Activated CD4-positive, alpha-beta T cell treated with anti-CD3 and anti-CD28 coated beads for 36 hours (primary cell): ENCODE measurements at regions of chr6 and their contacts with region 1.

Region 1: DNA sequence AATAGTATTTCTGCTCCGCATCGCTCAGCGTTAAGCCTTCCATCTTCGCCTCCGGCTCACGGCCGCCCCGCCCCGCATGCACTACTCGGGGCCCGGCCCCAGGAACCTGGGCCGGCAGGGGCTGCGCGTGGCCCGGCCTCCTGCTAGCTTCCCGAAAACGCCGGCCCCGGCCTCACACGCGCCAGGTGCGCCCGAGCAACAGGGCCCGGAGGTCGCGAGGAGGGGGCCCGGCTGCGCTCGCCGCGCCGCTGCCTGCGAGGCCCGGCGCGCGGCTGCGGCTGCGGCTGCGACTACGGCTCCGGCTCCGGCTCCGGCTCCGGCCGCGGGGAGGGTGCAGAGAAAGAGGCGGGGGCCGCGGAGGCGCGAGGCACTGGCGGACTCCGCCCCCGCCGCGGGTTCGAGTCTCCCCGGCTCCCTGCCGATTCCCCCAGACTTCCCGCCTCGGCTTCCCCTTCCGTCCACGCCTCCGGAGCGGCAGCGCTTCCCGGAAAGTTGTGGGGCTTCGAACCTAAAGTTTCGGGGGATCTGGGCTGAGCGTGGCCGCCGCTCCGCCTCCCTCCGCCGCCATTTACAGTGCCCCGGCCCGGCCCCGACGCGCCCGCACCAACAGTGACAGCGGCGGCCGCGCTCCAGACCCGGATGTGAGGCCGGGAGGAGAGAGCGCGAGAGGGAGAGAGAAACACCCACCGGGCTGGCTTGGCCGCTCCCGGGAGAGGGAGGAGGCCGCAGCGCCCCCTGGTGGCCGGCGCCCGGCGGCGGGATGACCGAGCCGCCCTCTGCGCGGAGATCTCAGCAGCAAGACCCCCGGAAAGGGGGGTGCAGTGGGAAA is at the start of gene REPS1:
- DNase-seq: peak; percentile 95
- ATAC-seq: peak; percentile 96
- H3K4me3 Mint-ChIP-seq: peak within 1 kb of the TSS; percentile 87
- H3K27ac Mint-ChIP-seq: peak within 1 kb of the TSS; percentile 91
- H3K4me1 Mint-ChIP-seq: peaks cover 6% of the 10 kb centered on the region
- H3K27me3 Mint-ChIP-seq: no peaks in the 10 kb centered on the region
- total RNA-seq, gene REPS1: 60.3 to 90.9 TPM

Region 2: DNA sequence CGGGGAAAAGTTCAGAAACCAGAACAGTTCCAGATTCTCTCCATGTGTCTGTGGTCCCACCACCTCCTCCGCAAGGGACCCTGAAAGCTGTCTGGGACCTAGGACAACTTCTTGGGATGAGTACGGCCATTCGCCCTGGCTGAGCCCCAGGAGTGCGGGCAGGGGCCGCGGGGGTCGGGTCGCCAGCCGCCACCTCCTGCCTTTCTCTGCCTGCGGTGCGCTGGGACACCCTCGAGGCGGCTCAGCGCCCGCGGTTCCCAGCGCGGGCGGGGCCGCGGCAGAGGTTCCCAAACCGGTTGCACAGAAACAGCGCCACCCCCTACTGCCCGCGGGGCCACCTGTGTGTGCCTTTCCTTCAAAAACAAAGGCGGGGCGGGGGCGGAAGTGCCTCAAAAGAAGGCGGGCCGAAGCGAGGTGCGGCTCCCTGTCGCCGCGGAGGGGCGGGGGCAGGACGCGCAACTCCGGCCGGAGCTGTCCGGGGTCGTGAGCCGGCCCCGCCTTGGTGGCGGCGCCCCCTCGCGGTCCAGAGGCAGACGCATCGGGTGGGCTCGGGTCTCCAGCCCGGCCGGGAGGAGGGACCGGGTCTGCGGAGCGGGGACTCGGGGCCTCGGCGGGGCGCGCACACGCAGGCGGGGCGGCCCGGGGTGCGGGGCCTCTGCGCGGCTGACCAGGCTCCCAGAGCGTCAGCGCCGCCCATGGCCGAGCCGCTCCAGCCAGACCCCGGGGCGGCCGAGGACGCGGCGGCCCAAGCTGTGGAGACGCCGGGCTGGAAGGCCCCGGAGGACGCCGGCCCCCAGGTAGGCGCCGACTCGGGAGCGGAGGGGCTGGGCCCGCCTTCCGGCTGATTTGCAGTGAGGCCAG is 583.8 kb before region 1 on chr6 and contains the start of gene HEBP2:
- CTCF ChIA-PET with region 1: no interaction called
- POLR2A ChIA-PET with region 1: no interaction called
- intact Hi-C with region 1: loop called in 1 of 2 experiments (anchors 10 kb)
- DNase-seq: peak; percentile 91
- ATAC-seq: peak; percentile 88
- H3K4me3 Mint-ChIP-seq: peak within 1 kb of the TSS; percentile 70
- H3K27ac Mint-ChIP-seq: peak within 1 kb of the TSS; percentile 37
- H3K4me1 Mint-ChIP-seq: peaks cover 6% of the 10 kb centered on the region
- H3K27me3 Mint-ChIP-seq: no peaks in the 10 kb centered on the region
- total RNA-seq, gene HEBP2: 4.0 to 4.7 TPM

Region 3: DNA sequence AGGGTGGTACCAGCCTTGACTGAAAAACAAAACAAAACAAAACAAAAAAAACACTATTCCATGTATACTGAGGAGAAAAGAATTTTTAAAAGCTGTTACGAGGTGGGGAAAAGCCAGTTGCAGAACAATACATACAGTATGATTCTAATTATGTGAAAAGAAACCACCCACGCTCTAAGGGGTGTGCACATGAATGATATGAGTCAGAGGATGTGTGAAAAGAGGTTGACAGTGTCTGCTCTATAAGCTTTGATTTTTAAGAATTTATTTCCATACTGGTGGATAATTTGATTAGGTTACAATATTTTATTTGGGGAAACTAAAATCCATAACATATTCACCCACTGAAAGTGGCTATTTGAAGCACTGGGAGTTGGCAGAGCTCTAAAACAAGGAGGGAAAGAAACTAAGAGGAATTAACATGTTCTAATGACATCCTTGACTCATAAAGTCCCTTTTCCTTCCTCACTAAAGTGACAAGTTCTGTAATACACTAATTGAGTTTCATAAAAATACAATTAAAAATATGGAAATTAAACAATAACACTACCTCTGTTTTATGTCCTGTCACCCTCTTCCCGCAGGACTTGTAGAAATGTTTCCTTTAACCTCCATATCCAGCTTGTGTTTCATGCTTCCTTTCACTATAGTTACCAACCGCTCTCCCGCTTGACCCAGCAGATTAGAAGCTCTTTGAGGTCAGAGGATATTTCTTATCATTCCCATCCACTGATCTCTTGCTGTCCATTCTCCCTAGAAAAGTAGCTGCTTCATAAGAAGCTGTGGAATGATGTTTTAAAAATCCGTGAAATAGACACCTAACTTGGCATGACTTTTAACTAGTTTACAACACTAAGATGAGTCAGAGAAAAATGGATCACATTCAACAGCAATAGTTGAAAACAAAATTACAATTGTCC is 332.9 kb before region 1 on chr6:
- CTCF ChIA-PET with region 1: no interaction called
- POLR2A ChIA-PET with region 1: no interaction called
- intact Hi-C with region 1: no loop called
- DNase-seq: peak; percentile 66
- ATAC-seq: peak; percentile 98
- H3K4me3 Mint-ChIP-seq: no peak overlapping the region
- H3K27ac Mint-ChIP-seq: no peak overlapping the region
- H3K4me1 Mint-ChIP-seq: peaks cover 21% of the 10 kb centered on the region
- H3K27me3 Mint-ChIP-seq: peaks cover 17% of the 10 kb centered on the region

Region 4: GRCh38 chr6:138692058-138692977 is 295.5 kb before region 1 on chr6:
- CTCF ChIA-PET with region 1: interaction called, 3 read pairs
- POLR2A ChIA-PET with region 1: no interaction called
- intact Hi-C with region 1: loop called in 1 of 2 experiments (anchors 2 kb)
- DNase-seq: peak; percentile 74
- ATAC-seq: peak; percentile 63
- H3K4me3 Mint-ChIP-seq: peak overlapping the region; percentile 68
- H3K27ac Mint-ChIP-seq: no peak overlapping the region
- H3K4me1 Mint-ChIP-seq: peaks cover 10% of the 10 kb centered on the region
- H3K27me3 Mint-ChIP-seq: peaks cover 29% of the 10 kb centered on the region

Region 5: DNA sequence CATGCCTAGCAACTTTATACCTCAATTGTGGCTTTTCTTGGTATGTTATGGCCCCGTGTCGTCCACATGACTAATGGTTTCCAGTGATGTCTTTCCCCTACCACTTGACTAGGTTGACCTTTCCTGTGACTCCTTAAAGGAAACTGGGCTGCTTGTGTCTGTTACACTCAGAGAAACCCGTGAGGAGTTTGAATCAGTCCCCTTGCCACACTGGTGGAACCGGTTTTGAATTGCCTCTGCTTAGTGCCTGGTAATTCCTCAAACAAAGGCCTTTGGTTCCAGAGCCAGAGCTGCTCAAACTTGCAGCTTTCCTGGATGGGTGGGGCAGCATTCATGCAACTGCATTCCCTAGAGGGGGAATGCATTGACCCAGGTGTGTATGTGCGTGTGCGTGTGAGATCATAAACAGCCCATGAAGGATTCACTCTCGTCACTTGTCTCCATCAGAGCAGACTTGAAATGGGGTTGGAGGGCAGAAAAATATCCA is 170.0 kb before region 1 on chr6:
- CTCF ChIA-PET with region 1: interaction called, 18 read pairs
- POLR2A ChIA-PET with region 1: no interaction called
- intact Hi-C with region 1: loop called (anchors 1 kb)
- DNase-seq: peak; percentile 43
- ATAC-seq: peak; percentile 75
- H3K4me3 Mint-ChIP-seq: no peak overlapping the region
- H3K27ac Mint-ChIP-seq: peak overlapping the region; percentile 82
- H3K4me1 Mint-ChIP-seq: peaks cover 24% of the 10 kb centered on the region
- H3K27me3 Mint-ChIP-seq: no peaks in the 10 kb centered on the region

Region 6: DNA sequence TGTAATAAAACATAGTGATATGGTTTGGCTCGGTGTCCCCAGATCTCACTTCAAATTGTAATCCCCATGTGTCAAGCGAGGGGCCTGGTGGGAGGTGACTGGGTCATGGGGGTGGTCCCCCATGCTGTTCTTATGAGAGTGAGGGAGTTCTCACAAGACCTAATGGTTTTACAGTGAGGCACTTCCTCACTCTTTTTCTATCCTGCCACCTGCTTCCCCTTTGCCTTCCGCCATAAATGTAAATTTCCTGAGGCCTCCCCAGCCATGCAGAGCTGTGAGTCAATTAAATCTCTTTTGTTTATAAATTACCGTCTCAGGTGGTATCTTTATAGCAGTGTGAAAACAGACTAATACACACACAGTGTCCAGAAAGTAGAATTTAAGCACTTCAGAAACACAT is 78.3 kb before region 1 on chr6:
- CTCF ChIA-PET with region 1: no interaction called
- POLR2A ChIA-PET with region 1: no interaction called
- intact Hi-C with region 1: no loop called
- DNase-seq: no peak
- ATAC-seq: no peak
- H3K4me3 Mint-ChIP-seq: no peak overlapping the region
- H3K27ac Mint-ChIP-seq: no peak overlapping the region
- H3K4me1 Mint-ChIP-seq: no peaks in the 10 kb centered on the region
- H3K27me3 Mint-ChIP-seq: no peaks in the 10 kb centered on the region

Region 7: DNA sequence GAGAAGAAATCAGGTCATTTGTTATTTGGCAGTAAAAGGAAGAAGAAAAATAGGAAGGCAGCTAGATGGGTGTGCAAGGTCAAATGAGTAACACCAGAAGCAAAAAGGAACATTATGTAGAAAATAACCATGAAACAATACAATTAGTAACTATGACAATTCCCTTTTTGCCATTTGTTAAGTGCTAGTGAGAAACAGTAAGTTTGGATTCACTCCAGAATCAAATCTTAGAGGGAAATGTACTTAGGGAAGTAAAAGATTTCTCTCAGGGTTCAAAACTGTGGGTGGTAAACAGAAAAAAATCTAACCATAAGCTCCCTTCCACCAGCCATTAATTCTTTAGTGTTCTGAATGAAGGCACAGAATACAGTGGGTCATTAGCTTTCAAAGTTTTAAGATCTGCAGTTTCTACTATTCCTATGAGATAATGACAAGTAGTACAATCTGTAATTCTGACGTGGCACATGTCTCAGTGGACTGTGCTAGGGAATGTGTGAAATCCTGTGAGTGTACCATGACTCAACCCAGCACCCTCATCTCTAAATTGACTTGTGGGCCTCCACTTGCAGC is 16.9 kb before region 1 on chr6:
- CTCF ChIA-PET with region 1: interaction called, 14 read pairs
- POLR2A ChIA-PET with region 1: interaction called, 4 read pairs
- intact Hi-C with region 1: no loop called
- DNase-seq: peak; percentile 52
- ATAC-seq: peak; percentile 98
- H3K4me3 Mint-ChIP-seq: no peak overlapping the region
- H3K27ac Mint-ChIP-seq: peak overlapping the region; percentile 49
- H3K4me1 Mint-ChIP-seq: peaks cover 65% of the 10 kb centered on the region
- H3K27me3 Mint-ChIP-seq: no peaks in the 10 kb centered on the region

Region 8: DNA sequence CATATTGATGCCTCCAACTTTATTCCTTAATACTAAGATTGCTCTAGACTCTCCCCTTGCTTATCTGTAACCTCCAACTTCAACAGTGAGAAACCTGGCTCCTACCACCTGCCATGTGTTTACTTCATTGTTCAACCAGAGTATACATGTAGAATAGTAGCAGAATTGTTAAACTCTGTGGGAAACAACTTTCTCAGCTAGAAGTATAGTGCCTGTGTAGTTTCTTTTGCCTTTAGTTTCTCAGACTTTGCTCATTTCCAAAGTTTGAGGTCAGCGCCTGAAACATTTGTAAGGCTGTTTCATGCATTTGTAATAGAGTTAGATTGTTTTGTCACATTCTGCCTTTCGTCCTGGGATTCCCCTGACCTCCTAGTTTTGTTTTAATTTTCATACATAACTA is 112.1 kb after region 1 on chr6:
- CTCF ChIA-PET with region 1: no interaction called
- POLR2A ChIA-PET with region 1: no interaction called
- intact Hi-C with region 1: loop called in 1 of 2 experiments (anchors 2 kb)
- DNase-seq: peak; percentile 44
- ATAC-seq: peak; percentile 98
- H3K4me3 Mint-ChIP-seq: no peak overlapping the region
- H3K27ac Mint-ChIP-seq: peak overlapping the region; percentile 67
- H3K4me1 Mint-ChIP-seq: peaks cover 26% of the 10 kb centered on the region
- H3K27me3 Mint-ChIP-seq: peaks cover 3% of the 10 kb centered on the region

Region 9: DNA sequence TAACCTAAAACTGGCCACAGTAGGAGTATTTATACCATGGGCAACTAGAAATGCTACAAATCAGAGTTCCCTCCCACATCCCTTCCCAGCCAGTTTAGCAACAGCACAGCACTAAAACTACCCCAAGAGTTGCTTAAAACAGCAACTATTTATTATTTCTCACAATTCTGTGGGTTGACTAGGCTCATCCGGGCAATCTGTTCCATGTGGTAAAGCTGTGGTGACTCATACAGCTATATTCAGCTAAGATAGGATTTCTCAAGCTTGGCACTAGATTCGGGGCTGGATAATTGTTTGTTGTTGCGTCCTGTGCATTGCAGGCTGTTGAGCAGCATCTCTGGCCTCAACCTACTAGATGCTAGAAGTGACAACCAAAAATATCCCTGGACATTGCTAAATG is 138.4 kb after region 1 on chr6:
- CTCF ChIA-PET with region 1: no interaction called
- POLR2A ChIA-PET with region 1: no interaction called
- intact Hi-C with region 1: no loop called
- DNase-seq: peak; percentile 60
- ATAC-seq: peak; percentile 57
- H3K4me3 Mint-ChIP-seq: no peak overlapping the region
- H3K27ac Mint-ChIP-seq: peak overlapping the region; percentile 95
- H3K4me1 Mint-ChIP-seq: peaks cover 57% of the 10 kb centered on the region
- H3K27me3 Mint-ChIP-seq: no peaks in the 10 kb centered on the region

Region 10: GRCh38 chr6:139173172-139173571 is 185.3 kb after region 1 on chr6:
- CTCF ChIA-PET with region 1: no interaction called
- POLR2A ChIA-PET with region 1: no interaction called
- intact Hi-C with region 1: loop called in 1 of 2 experiments (anchors 5 kb)
- DNase-seq: no peak
- ATAC-seq: peak; percentile 89
- H3K4me3 Mint-ChIP-seq: no peak overlapping the region
- H3K27ac Mint-ChIP-seq: peak overlapping the region; percentile 87
- H3K4me1 Mint-ChIP-seq: peaks cover 91% of the 10 kb centered on the region
- H3K27me3 Mint-ChIP-seq: no peaks in the 10 kb centered on the region